Adrenal gland (tissue), 19 donors: ENCODE measurements at regions of chr2 and their contacts with region 1.

Region 1: DNA sequence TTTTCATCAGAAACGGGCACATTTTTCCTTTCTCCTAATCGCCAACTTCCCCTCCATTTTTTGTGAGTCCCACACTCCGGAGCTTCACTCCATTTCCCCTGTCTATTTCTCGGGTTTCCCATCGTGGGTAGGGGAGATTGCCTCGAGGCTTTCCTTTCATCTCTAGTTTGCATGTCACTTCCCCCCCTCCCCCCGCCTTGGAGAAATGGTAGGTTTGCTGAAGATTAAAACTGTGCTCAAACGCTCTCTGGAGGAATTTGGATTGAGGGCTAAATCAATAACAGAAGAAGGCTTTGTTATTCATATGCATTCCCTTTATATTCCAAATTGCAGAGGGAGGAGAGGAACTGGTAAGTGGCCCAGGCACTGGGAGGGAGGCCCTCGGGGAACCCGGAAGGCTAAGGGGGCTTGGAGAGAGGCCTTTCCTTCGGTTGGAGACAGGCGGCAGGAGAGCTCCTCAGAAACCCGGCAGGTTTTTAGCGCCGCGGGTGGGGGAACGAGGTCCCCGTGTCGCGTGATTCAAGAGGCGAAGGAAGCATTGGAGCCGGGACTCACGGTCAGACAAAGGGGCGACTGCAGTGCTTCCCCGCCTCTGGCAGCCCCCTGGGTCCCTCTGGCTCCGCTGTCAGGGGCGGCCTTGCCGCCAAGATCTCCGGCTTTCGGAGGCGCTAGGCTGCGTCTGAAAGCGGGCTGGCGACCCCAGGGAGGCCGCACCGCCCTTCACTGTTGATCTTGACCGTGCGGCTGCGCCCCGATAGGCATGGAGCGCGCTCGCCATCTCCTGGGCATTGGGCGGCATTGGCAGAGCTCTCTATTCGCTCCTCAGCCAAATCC is 2.4 kb upstream of the HOXD12 start:
- DNase-seq: peak; percentile 42 to 77 (median 65)
- H3K4me3 ChIP-seq: peak overlapping the region in 1 of 4 donors; percentile 35
- H3K27ac ChIP-seq: no peak overlapping the region
- H3K4me1 ChIP-seq: peaks cover 0 to 25% of the 10 kb centered on the region in 2 donors
- H3K27me3 ChIP-seq: peaks cover 99% of the 10 kb centered on the region
- CTCF ChIP-seq: peak; percentile 58 to 90 (median 70)
- POLR2A ChIP-seq: no peak

Region 2: GRCh38 chr2:175251425-175252041 is 845.7 kb before region 1 on chr2:
- intact Hi-C with region 1: loop called in 1 of 2 experiments (anchors 10 kb)
- DNase-seq: peak in 3 of 7 donors; percentile 8 to 24 (median 18)
- H3K4me3 ChIP-seq: no peak overlapping the region
- H3K27ac ChIP-seq: no peak overlapping the region
- H3K4me1 ChIP-seq: no peaks in the 10 kb centered on the region
- H3K27me3 ChIP-seq: peaks cover 9% of the 10 kb centered on the region
- CTCF ChIP-seq: peak; percentile 26 to 74 (median 48)
- POLR2A ChIP-seq: no peak

Region 3: GRCh38 chr2:175366815-175367214 is 730.4 kb before region 1 on chr2:
- intact Hi-C with region 1: loop called in 1 of 2 experiments (anchors 5 kb)
- DNase-seq: peak in 6 of 7 donors; percentile 18 to 58 (median 36)
- H3K4me3 ChIP-seq: no peak overlapping the region
- H3K27ac ChIP-seq: no peak overlapping the region
- H3K4me1 ChIP-seq: peaks cover 0 to 5% of the 10 kb centered on the region in 2 donors
- H3K27me3 ChIP-seq: peaks cover 7% of the 10 kb centered on the region
- CTCF ChIP-seq: peak; percentile 62 to 81 (median 80)
- POLR2A ChIP-seq: no peak

Region 4: DNA sequence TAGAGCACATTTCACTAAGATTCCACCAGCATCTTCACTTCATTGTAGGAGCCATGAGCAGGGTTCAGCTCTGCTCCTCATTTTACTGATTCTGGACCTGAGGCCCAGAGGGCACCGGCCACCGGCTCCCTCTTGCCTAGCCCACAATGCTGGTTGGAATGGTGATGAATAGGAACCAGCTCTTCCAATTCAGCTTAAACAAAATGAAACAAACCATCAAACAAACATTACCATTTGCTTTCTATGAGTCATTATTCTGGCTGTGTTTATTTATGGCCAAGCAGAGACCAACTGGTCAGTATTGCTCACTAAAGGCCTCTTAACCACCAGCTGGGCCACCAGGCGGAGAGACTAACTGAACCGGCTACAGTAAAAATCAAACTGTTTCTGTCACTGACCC is 348.8 kb after region 1 on chr2:
- intact Hi-C with region 1: no loop called
- DNase-seq: no peak
- H3K4me3 ChIP-seq: no peak overlapping the region
- H3K27ac ChIP-seq: no peak overlapping the region
- H3K4me1 ChIP-seq: no peaks in the 10 kb centered on the region
- H3K27me3 ChIP-seq: no peaks in the 10 kb centered on the region
- CTCF ChIP-seq: no peak
- POLR2A ChIP-seq: no peak